ENCODE measurements at regions of chr6 and their contacts with region 1.

Region 1: GRCh38 chr6:83514866-83515466 is 2.6 kb downstream of the PRSS35 start:
- DNase-seq: no peak
- ATAC-seq: peak; percentile 65 to 78 (median 72)
- H3K4me3 ChIP-seq: no peak overlapping the region
- H3K27ac ChIP-seq: no peak overlapping the region
- H3K4me1 ChIP-seq: peaks cover 0 to 4% (median 0%) of the 10 kb centered on the region in 4 donors
- H3K27me3 ChIP-seq: no peaks in the 10 kb centered on the region
- CTCF ChIP-seq: peak; percentile 76 to 87 (median 81)
- POLR2A ChIP-seq: no peak

Region 2: DNA sequence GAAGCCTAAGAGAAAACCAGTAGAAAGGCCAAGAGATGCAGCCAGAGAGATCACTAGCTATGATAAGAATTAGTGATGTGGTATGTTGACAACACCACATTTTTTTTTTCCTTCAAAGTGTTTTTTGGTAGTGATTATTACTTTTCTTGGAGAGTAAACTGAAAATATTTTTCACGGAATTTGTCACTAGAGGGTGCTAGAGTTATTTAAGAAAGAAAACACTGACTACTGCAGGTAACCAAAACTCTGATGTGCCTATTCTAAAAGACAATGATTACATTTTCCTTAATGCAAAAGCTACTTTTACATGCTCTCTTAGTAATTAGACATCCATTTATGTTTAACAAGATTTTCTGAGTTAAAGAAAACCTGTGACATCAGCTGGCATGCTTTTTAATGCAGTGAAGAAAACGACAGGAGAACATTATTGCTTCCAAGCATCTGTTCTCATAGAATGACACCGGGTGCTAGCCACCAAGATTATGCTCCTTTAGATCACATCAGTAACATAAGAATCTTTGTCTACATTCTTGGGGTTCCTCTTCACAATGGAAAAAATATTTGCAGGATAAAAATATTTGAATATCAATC is 293.0 kb before region 1 on chr6:
- intact Hi-C with region 1: loop called in 1 of 2 experiments (anchors 10 kb)
- DNase-seq: no peak
- ATAC-seq: peak in 3 of 4 donors; percentile 46 to 52 (median 49)
- H3K4me3 ChIP-seq: no peak overlapping the region
- H3K27ac ChIP-seq: no peak overlapping the region
- H3K4me1 ChIP-seq: no peaks in the 10 kb centered on the region
- H3K27me3 ChIP-seq: no peaks in the 10 kb centered on the region
- CTCF ChIP-seq: peak; percentile 48 to 65 (median 55)
- POLR2A ChIP-seq: no peak

Region 3: DNA sequence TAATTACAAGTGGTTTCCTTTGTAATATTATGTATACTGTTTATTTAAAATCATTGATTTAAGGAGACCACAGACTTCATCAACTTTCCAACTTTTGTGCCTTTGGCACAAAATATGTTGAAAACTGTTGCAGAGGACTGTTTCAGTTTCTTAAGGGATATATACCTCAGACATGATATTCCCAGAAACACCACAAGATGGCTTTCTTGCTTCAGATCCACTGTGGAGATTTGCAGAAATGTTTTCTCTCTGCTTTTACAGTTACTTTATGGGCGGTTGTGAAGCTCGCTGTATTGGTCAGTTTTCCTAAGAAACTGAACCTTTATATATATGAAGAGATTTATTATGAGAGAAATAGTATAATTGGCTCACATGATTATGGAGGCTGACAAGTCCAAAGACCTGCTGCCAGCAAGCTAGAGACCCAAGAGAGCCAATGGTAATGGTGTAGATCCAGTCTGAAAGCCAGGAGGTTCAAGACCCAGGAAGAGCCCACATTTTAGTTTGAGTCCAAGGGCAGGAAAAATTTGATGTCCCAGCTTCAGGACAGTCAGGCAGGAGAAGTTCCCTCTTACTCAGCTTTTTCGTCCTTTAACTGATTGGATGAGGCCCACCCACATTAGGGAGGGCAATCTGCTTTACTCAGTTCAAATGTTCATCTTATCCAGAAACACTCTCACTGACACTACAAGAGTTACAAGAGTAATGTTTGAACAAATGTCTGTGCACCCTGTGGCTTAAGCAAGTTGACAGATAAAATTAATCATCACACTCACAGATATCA is 96.9 kb before region 1 on chr6:
- intact Hi-C with region 1: loop called (anchors 5 kb)
- DNase-seq: no peak
- ATAC-seq: peak; percentile 86 to 93 (median 89)
- H3K4me3 ChIP-seq: no peak overlapping the region
- H3K27ac ChIP-seq: no peak overlapping the region
- H3K4me1 ChIP-seq: no peaks in the 10 kb centered on the region
- H3K27me3 ChIP-seq: no peaks in the 10 kb centered on the region
- CTCF ChIP-seq: peak; percentile 59 to 82 (median 66)
- POLR2A ChIP-seq: no peak